MCF 10A (cell line): ENCODE measurements at regions of chr5 and their contacts with region 1.

Region 1: DNA sequence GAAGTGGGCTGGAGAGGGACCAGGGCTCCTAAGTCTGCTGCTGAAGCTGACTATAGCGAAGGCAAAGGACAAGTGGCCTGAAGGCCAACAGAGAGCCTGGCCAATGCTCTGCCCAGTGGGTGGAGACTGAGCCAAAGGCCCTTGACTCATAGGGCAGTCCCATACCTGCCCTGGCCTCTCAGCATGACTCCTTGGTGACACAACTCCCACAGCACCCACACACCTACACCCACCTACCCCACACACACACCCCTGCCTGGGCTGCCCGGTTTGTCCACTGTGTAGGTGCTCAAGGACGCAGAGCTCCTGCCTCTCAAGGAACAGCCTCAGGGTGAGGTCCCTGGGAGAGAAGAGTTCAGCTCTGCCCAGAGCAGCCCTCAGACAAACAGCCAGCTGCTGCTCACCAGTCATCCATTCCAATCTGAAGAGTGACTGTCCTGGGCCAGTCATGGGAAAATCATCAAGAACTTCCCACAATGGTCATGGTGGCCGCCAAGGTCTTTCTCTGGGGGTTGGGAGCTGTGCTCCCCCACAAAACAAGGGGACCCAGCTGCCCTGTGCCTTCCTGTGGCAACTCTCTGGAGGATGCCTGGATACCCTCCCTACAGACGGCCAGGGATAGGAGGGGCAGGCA is 5.0 kb downstream of the TNIP1 start:
- DNase-seq: peak; percentile 75
- H3K4me3 Mint-ChIP-seq: peak overlapping the region; percentile 65
- H3K27ac Mint-ChIP-seq: peak overlapping the region; percentile 94
- H3K4me1 Mint-ChIP-seq: peaks cover 77% of the 10 kb centered on the region
- H3K27me3 Mint-ChIP-seq: no peaks in the 10 kb centered on the region
- CTCF ChIP-seq: no peak

Region 2: DNA sequence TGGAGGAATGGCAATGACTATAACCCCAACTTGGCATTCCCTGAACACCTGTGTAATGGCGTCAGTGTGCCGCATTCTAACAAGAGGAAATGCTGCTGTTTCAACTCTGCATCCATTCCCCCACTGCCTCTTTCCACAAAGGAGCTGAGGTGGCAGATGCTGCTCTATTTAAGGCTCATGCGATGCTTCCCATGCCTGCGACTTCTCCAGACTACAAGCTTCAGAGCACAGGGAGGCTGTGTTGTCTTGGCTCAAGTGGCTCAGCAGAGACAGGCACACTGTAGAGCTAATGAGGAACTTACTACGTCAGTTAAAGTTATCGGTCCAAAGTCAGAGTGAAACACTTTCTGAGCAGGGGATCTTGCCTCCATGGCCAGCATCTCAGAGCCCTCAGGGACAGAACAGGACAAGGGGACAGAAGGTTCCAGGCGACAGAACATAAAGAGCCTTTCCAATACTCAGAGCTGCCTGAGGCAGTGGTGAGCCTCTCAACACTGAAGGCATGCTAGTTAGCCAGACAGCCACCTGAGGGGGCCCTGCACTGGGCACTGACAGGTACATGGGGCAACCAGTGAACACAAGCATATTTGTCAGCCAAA is 16.8 kb before region 1 on chr5:
- CTCF ChIA-PET with region 1: interaction called, 332 read pairs
- POLR2A ChIA-PET with region 1: interaction called, 13 read pairs
- intact Hi-C with region 1: no loop called
- DNase-seq: no peak
- H3K4me3 Mint-ChIP-seq: no peak overlapping the region
- H3K27ac Mint-ChIP-seq: peak overlapping the region; percentile 40
- H3K4me1 Mint-ChIP-seq: peaks cover 25% of the 10 kb centered on the region
- H3K27me3 Mint-ChIP-seq: no peaks in the 10 kb centered on the region
- CTCF ChIP-seq: no peak

Region 3: GRCh38 chr5:151093476-151093889 is 17.7 kb after region 1 on chr5:
- CTCF ChIA-PET with region 1: interaction called, 18 read pairs
- POLR2A ChIA-PET with region 1: interaction called, 78 read pairs
- intact Hi-C with region 1: loop called (anchors 2 kb)
- DNase-seq: peak; percentile 98
- H3K4me3 Mint-ChIP-seq: peak overlapping the region; percentile 28
- H3K27ac Mint-ChIP-seq: peak overlapping the region; percentile 76
- H3K4me1 Mint-ChIP-seq: peaks cover 43% of the 10 kb centered on the region
- H3K27me3 Mint-ChIP-seq: no peaks in the 10 kb centered on the region
- CTCF ChIP-seq: no peak